Panc1 (cell line): ENCODE measurements at regions of chr2 and their contacts with region 1.

Region 1: GRCh38 chr2:70301344-70302194 is at the start of gene FAM136A:
- DNase-seq: no peak
- ATAC-seq: peak; percentile 95
- H3K4me3 ChIP-seq: peak within 1 kb of the TSS; percentile 71 to 88
- H3K27ac ChIP-seq: peak within 1 kb of the TSS; percentile 82
- H3K4me1 ChIP-seq: peaks cover 5% of the 10 kb centered on the region
- H3K27me3 ChIP-seq: no peaks in the 10 kb centered on the region
- CTCF ChIP-seq: peak; percentile 98
- total RNA-seq, gene FAM136A: 53.4 TPM

Region 2: DNA sequence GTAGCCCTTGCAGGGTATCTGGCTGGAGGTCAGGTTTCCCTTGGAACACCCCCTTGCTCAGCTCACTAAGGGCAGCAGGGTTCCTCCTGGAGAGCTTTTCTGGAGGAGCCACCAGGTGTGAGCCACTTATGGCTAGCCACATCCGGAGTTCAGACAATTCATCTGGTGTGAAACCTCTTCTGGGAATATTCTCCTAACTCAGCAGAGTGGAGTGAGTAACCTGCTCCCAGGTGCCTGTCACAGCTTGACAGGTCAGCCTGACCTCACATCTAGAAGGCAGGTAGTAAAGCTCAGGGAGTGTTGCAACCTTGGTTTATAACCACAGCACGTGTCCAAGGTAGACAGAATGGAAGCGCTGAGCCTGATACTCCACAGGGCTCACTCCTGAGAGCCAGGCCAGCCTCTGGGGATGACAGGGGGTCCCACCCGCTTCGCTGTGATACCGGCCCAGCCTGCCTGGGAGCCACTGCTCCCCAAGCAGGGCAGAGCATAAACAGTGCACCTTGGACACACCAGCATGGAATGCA is 314.7 kb after region 1 on chr2:
- CTCF ChIA-PET with region 1: interaction called, 10 read pairs
- POLR2A ChIA-PET with region 1: no interaction called
- in situ Hi-C with region 1: no loop called
- intact Hi-C with region 1: loop called (anchors 10 kb)
- DNase-seq: no peak
- ATAC-seq: no peak
- H3K4me3 ChIP-seq: no peak overlapping the region
- H3K27ac ChIP-seq: no peak overlapping the region
- H3K4me1 ChIP-seq: no peaks in the 10 kb centered on the region
- H3K27me3 ChIP-seq: peaks cover 10% of the 10 kb centered on the region
- CTCF ChIP-seq: no peak

Region 3: GRCh38 chr2:70647873-70648481 is 346.4 kb after region 1 on chr2:
- CTCF ChIA-PET with region 1: interaction called, 14 read pairs
- POLR2A ChIA-PET with region 1: no interaction called
- in situ Hi-C with region 1: no loop called
- intact Hi-C with region 1: loop called (anchors 1 kb)
- DNase-seq: peak; percentile 72
- ATAC-seq: peak; percentile 82
- H3K4me3 ChIP-seq: no peak overlapping the region
- H3K27ac ChIP-seq: no peak overlapping the region
- H3K4me1 ChIP-seq: no peaks in the 10 kb centered on the region
- H3K27me3 ChIP-seq: peaks cover 7% of the 10 kb centered on the region
- CTCF ChIP-seq: peak; percentile 99

Region 4: DNA sequence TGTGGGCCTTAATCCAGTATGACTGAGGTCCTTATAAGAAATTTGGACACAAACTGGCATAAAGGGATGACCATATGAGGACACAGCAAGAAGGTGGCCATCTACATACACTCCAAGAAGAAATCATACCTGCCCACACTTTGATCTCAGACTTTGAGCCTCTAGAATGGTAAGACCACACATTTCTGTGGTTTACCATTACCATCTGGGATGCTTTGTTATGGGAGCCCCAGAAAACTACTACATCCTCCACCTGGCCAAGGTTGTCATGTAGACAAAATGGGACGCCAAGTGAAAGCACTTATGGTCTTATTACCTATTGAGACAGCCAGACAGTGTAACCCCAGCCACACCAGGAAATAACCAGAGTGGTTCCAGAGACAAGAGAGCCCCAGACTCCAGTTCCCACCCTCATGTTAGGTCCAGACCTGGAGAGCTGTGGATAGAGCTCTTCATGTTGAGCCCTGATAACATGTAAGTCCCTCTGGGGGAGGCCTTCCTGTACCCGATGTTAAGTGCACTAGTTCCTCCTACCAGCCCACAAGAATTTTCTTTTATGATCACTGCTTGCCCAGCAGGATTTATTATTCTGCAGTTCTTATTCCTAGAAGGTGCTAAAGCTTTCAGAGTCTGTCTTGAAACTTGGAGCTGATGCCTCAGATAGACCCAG is 471.1 kb after region 1 on chr2:
- CTCF ChIA-PET with region 1: no interaction called
- POLR2A ChIA-PET with region 1: interaction called, 19 read pairs
- in situ Hi-C with region 1: no loop called
- intact Hi-C with region 1: no loop called
- DNase-seq: no peak
- ATAC-seq: no peak
- H3K4me3 ChIP-seq: no peak overlapping the region
- H3K27ac ChIP-seq: no peak overlapping the region
- H3K4me1 ChIP-seq: no peaks in the 10 kb centered on the region
- H3K27me3 ChIP-seq: peaks cover 43% of the 10 kb centered on the region
- CTCF ChIP-seq: no peak